IMR-90 (cell line): ENCODE measurements at regions of chr10 and their contacts with region 1.

Region 1: DNA sequence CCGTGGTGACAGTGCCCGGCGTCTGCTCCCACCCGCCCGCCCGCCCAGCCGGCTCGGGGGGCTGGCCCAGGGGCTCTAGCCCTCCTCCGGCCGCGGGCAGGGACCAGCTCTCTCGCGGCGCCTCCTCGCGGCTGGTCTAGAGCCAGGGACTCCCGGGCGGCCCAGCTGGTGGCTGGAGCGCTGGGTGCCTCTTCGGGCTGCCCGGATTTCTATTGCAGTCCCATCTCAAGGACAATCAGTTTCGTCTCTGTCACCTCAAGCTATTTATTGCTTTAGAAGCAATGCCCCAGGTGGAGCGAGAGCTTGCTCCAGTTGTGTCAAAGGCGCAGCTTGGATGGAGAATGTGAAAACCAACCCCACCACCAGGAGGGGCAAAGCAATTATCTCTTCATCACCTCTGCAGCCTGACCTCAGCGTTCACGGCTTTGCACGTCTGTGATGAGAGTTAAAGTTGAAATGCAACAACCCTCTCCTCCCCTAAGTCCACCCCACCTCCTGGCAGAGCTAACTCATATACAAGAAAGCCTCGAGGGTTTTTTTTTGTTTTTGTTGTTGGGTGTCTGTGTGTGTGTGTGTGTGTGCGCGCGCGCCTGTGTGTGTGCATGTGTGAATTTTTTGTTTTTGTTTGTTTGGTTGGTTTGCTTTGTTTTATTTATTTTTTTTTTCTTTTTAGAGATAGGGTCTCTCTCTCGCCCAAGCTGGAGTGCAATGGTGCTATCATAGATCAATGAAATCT is at the start of gene ITGA8:
- DNase-seq: no peak
- ATAC-seq: peak; percentile 64; the same call in 1 of the 2 replicates
- H3K4me3 ChIP-seq: peak within 1 kb of the TSS; percentile 24; the same call in 1 of the 2 replicates
- H3K27ac ChIP-seq: no peak within 1 kb of the TSS
- H3K4me1 ChIP-seq: no peaks in the 10 kb centered on the region
- H3K27me3 ChIP-seq: peaks cover 43% of the 10 kb centered on the region
- CTCF ChIP-seq: 0 out of 2 replicates have a peak, but pooled peaks have one; percentile 6
- POLR2A ChIP-seq: no peak
- RAD21 ChIP-seq: no peak
- total RNA-seq, gene ITGA8: under 0.01 TPM in 2 replicates

Region 2: GRCh38 chr10:15122477-15123030 is 597.5 kb before region 1 on chr10:
- CTCF ChIA-PET with region 1: no interaction called
- POLR2A ChIA-PET with region 1: no interaction called
- dilution Hi-C with region 1: no loop called
- in situ Hi-C with region 1: no loop called
- intact Hi-C with region 1: no loop called
- DNase-seq: no peak
- ATAC-seq: no peak
- H3K4me3 ChIP-seq: no peak overlapping the region
- H3K27ac ChIP-seq: no peak overlapping the region
- H3K4me1 ChIP-seq: peaks cover 7% of the 10 kb centered on the region
- H3K27me3 ChIP-seq: no peaks in the 10 kb centered on the region
- CTCF ChIP-seq: no peak
- POLR2A ChIP-seq: no peak
- RAD21 ChIP-seq: no peak

Region 3: GRCh38 chr10:15439341-15439842 is 280.7 kb before region 1 on chr10:
- CTCF ChIA-PET with region 1: interaction called, 13 read pairs
- POLR2A ChIA-PET with region 1: no interaction called
- dilution Hi-C with region 1: no loop called
- in situ Hi-C with region 1: loop called (anchors 5 kb)
- intact Hi-C with region 1: loop called (anchors 1 kb)
- DNase-seq: peak; percentile 11
- ATAC-seq: peak; percentile 73
- H3K4me3 ChIP-seq: peak overlapping the region; percentile 9
- H3K27ac ChIP-seq: no peak overlapping the region
- H3K4me1 ChIP-seq: no peaks in the 10 kb centered on the region
- H3K27me3 ChIP-seq: peaks cover 8% of the 10 kb centered on the region
- CTCF ChIP-seq: peak; percentile 26; the same call in 1 of the 2 replicates
- POLR2A ChIP-seq: no peak
- RAD21 ChIP-seq: no peak

Region 4: DNA sequence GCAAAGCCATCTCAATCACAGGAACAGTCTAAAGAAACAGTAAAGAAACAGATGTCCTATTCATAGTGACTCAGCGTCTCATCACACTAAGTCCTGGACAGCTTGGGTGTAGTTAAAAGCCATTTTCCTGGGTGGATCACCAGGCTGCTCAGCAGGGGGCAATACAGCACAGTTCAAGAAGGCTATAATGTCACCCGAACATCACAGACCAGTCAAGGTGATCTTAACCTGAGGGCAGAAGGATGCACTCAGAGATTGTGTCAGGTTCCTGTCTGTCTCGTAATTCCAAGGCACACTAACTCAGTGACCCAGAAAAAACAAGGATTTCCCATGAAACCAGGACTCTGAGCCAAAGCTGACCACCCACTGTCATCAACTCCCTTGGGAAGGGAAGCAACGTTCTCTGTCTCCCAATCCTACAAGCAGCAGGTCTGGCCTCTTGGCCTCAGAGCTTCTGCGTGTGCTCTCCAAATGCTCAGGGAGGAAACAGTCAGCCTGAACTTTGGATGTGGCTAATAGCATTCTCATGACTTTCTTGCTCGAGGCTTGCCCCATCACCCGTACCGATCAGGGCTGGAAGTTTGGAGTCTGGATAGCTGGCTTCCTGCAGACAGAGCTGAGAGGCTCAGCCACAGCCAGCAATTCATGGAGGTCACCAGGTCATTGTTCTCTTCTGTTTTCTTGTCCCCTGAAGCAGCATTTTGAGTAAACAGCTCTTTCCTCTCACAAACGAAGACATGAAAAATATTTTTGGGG is 258.5 kb before region 1 on chr10:
- CTCF ChIA-PET with region 1: interaction called, 11 read pairs
- POLR2A ChIA-PET with region 1: no interaction called
- dilution Hi-C with region 1: no loop called
- in situ Hi-C with region 1: no loop called
- intact Hi-C with region 1: loop called (anchors 1 kb)
- DNase-seq: peak; percentile 27
- ATAC-seq: peak; percentile 72
- H3K4me3 ChIP-seq: no peak overlapping the region
- H3K27ac ChIP-seq: no peak overlapping the region
- H3K4me1 ChIP-seq: peaks cover 5% of the 10 kb centered on the region
- H3K27me3 ChIP-seq: peaks cover 4% of the 10 kb centered on the region
- CTCF ChIP-seq: peak; percentile 38; the same call in 1 of the 2 replicates
- POLR2A ChIP-seq: no peak
- RAD21 ChIP-seq: 0 out of 2 replicates have a peak, but pooled peaks have one; percentile 14

Region 5: DNA sequence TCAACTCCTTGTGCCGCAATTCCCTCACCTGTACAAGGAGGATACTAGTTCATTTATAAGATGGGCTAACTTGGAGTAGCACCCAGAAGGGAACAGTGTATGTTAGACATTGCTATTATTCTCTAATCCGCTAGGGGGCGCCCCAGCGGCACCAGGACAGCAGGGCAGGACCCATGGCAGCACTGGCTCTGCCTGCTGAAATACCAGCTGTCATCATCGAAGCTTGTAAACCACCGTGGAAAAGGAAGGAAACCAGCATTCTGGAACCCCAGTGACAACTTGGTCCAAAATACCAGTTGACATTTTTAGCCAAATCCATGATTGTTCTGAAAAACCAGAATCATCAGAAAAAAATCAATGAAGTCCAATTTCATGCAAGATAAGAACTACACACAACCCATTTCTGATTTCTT is 134.8 kb before region 1 on chr10:
- CTCF ChIA-PET with region 1: interaction called, 13 read pairs
- POLR2A ChIA-PET with region 1: no interaction called
- dilution Hi-C with region 1: no loop called
- in situ Hi-C with region 1: no loop called
- intact Hi-C with region 1: no loop called
- DNase-seq: peak; percentile 19
- ATAC-seq: peak; percentile 84
- H3K4me3 ChIP-seq: no peak overlapping the region
- H3K27ac ChIP-seq: no peak overlapping the region
- H3K4me1 ChIP-seq: peaks cover 4% of the 10 kb centered on the region; the same call in 1 of the 2 replicates
- H3K27me3 ChIP-seq: no peaks in the 10 kb centered on the region
- CTCF ChIP-seq: peak; percentile 57
- POLR2A ChIP-seq: no peak
- RAD21 ChIP-seq: peak; percentile 28; the same call in 1 of the 2 replicates

Region 6: GRCh38 chr10:15661574-15661973 is 58.5 kb before region 1 on chr10:
- CTCF ChIA-PET with region 1: no interaction called
- POLR2A ChIA-PET with region 1: no interaction called
- dilution Hi-C with region 1: no loop called
- in situ Hi-C with region 1: no loop called
- intact Hi-C with region 1: no loop called
- DNase-seq: no peak
- ATAC-seq: no peak
- H3K4me3 ChIP-seq: no peak overlapping the region
- H3K27ac ChIP-seq: no peak overlapping the region
- H3K4me1 ChIP-seq: no peaks in the 10 kb centered on the region
- H3K27me3 ChIP-seq: peaks cover 2% of the 10 kb centered on the region; the same call in 1 of the 2 replicates
- CTCF ChIP-seq: no peak
- POLR2A ChIP-seq: no peak
- RAD21 ChIP-seq: no peak

Region 7: GRCh38 chr10:15802375-15802949 is 82.4 kb after region 1 on chr10:
- CTCF ChIA-PET with region 1: no interaction called
- POLR2A ChIA-PET with region 1: no interaction called
- dilution Hi-C with region 1: no loop called
- in situ Hi-C with region 1: no loop called
- intact Hi-C with region 1: no loop called
- DNase-seq: no peak
- ATAC-seq: no peak; the same call in none of the 2 replicates
- H3K4me3 ChIP-seq: no peak overlapping the region
- H3K27ac ChIP-seq: no peak overlapping the region; the same call in 1 of the 2 replicates
- H3K4me1 ChIP-seq: no peaks in the 10 kb centered on the region; the same call in 1 of the 2 replicates
- H3K27me3 ChIP-seq: no peaks in the 10 kb centered on the region
- CTCF ChIP-seq: no peak
- POLR2A ChIP-seq: no peak
- RAD21 ChIP-seq: no peak

Region 8: DNA sequence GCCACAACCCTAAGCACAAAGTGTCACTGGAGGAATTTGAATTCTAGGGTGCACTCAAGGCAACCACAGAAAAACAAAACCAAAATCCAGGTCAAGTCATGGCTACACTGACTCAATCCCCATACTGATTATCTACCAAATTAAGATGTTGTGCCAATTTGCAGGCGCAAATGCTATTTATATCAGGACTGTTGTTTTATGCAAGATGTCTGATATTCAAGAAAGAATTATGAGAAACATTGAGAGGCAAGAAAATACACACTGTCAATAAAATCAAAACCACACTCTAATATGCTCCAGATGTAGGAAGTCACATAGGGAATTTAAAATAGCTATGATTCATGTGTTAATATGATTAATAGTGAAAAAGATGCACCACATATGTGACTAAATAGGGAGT is 281.5 kb after region 1 on chr10:
- CTCF ChIA-PET with region 1: no interaction called
- POLR2A ChIA-PET with region 1: no interaction called
- dilution Hi-C with region 1: no loop called
- in situ Hi-C with region 1: no loop called
- intact Hi-C with region 1: no loop called
- DNase-seq: no peak
- ATAC-seq: no peak
- H3K4me3 ChIP-seq: no peak overlapping the region
- H3K27ac ChIP-seq: no peak overlapping the region
- H3K4me1 ChIP-seq: no peaks in the 10 kb centered on the region
- H3K27me3 ChIP-seq: no peaks in the 10 kb centered on the region
- CTCF ChIP-seq: no peak
- POLR2A ChIP-seq: no peak
- RAD21 ChIP-seq: no peak